HEK293 (cell line): ENCODE measurements at regions of chr1 and their contacts with region 1.

Region 1: GRCh38 chr1:65002508-65003315 is 36.4 kb upstream of the JAK1 start:
- H3K4me3 ChIP-seq: peak overlapping the region; percentile 59
- H3K27ac ChIP-seq: peak overlapping the region; percentile 42; the same call in 1 of the 2 replicates
- H3K4me1 ChIP-seq: no peaks in the 10 kb centered on the region
- CTCF ChIP-seq: peak; percentile 65

Region 2: DNA sequence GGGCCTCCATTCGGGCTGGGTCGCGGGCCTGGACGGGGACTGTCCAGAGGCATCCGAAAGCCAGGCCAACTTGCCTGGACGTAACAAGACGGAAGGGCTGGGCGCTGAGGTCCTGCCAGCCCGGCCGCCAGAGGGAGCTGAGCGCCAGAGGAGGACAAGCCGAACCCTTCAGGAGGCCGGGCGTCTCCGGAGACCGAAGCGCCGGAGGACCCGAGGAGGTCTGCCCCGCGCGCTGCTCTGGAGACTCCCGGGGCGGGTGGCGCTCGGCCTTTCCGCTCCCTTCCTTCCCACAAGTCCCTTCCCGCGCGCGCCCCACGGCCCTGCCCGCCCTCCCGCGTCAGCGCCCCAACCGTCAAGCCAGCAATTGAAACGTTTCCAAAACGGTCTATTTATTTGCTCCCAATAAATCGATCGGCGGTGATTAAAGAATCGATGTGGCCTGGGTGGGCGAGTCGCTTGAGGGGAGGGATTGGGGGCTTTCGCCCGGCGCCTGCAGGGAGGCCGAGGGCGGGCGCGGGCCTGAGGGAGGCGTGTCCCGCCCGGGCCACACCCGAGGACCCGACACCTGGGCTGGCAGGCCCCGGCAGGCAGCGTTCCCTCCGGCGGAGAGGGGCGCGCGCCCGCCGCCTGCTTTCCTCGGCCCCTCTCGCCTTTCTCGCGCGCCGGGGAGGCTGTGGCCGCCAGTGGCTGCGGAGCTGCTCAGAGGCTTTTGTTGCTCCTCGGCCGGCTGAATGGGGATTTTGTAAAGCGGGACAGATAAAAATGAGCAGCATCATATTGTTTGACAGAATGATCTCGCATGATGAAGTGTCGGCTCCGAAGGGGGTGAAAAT is 1685.5 kb before region 1 on chr1:
- CTCF ChIA-PET with region 1: interaction called, 11 read pairs
- POLR2A ChIA-PET with region 1: no interaction called
- H3K4me3 ChIP-seq: peak overlapping the region; percentile 54
- H3K27ac ChIP-seq: peak overlapping the region; percentile 68
- H3K4me1 ChIP-seq: peaks cover 7% of the 10 kb centered on the region; the same call in 1 of the 2 replicates
- CTCF ChIP-seq: peak; percentile 90

Region 3: DNA sequence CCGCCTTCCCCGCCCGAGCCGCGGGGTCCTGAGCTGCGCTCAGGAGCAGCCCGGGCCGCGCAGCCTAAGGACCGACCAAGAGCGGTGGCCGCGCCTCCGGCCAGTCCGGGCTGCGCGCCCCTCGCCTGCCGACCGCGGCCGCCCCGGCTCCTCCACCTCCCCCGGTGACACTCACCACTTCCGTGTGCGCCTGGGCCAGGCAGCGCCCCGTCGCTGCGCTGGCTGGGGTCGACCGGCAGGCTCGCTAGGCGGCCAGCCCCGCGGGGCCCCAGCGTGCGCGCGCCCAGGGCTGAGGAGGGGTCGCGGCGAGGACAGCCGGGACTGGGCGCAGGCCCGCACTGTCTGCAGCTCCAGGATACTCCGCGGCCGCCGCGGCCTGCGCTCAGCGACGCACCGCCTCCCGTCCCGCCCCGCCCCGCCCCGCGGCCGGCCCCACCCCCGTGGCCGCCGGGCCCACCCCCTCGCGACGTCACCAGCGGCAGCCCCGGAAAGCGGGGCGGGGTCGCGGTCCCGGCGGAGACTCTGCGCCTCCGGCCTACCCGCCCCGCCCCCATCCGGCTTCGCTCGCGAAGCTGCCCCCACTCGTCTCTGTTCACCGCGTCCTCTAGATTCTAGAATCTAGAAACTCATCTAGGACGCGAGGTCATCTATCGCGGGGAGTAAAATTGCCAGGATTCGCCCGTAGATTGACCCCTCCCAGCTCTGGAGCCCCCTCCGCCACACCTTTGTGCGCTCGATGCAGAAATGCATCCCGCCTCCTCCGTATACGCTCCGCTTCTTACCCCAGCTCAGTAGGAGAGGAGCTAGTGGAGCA is 36.3 kb before region 1 on chr1 and contains the start of gene JAK1:
- CTCF ChIA-PET with region 1: no interaction called
- POLR2A ChIA-PET with region 1: interaction called, 15 read pairs
- H3K4me3 ChIP-seq: peak within 1 kb of the TSS; percentile 89
- H3K27ac ChIP-seq: peak within 1 kb of the TSS; percentile 86
- H3K4me1 ChIP-seq: peaks cover 3% of the 10 kb centered on the region
- CTCF ChIP-seq: no peak

Region 4: GRCh38 chr1:65027666-65028358 is 25.1 kb after region 1 on chr1:
- CTCF ChIA-PET with region 1: no interaction called
- POLR2A ChIA-PET with region 1: no interaction called
- H3K4me3 ChIP-seq: no peak overlapping the region
- H3K27ac ChIP-seq: no peak overlapping the region
- H3K4me1 ChIP-seq: 0 out of 2 replicates have a peak, but pooled peaks cover 2% of the 10 kb centered on the region
- CTCF ChIP-seq: no peak